ENCODE measurements at regions of chr12 and their contacts with region 1.

Region 1: DNA sequence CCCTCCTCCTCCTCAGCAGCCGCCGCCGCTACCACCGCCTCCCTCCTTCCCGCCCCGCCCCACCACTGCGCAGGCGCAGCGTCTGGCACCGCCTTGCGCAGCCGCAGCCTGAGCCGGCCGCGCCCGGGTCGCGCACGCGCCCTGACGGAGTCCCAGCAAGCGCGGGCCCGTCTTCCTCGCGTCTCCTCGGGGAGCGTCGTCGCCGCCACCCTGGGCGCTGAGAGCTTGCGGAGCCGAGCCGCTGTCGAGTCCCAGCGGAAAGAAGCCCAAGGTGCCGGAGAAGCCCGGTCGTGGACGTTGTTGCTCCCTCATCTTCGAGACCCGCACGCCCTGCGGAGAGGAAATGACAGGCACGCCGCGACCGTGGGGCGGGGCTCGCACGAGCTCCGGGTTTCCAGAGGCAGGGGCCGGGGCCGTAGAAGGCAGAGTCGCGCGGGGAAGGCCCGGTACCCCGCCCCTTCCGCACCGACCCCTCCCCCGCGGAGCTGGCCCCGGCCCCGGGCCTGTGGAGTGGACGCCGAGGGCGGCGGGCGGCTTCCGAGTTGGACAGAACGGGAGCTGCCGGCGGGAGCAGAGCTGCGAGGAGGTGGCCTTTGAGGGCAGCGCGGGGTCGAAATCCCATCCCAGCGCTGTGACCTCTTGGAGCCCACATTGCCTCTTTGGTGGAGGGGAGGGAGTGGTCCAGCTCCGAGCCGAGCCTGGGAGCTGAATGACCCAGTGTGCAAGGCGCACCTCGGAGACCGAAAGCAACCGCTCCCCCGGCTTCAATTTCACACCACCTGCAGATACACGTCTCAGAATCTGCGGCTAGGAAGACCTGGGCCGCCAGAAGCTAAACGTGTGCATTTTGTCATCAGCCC is 469 bp upstream of the RAB35 start:
- DNase-seq: peak; percentile 53 to 96 (median 82)
- H3K4me3 ChIP-seq: peak overlapping the region; percentile 59 to 97 (median 88)
- H3K27ac ChIP-seq: peak overlapping the region; percentile 45 to 98 (median 90)
- H3K27me3 ChIP-seq: no peaks in the 10 kb centered on the region
- CTCF ChIP-seq: peak in 14 of 56 donors; percentile 7 to 52 (median 21)

Region 2: DNA sequence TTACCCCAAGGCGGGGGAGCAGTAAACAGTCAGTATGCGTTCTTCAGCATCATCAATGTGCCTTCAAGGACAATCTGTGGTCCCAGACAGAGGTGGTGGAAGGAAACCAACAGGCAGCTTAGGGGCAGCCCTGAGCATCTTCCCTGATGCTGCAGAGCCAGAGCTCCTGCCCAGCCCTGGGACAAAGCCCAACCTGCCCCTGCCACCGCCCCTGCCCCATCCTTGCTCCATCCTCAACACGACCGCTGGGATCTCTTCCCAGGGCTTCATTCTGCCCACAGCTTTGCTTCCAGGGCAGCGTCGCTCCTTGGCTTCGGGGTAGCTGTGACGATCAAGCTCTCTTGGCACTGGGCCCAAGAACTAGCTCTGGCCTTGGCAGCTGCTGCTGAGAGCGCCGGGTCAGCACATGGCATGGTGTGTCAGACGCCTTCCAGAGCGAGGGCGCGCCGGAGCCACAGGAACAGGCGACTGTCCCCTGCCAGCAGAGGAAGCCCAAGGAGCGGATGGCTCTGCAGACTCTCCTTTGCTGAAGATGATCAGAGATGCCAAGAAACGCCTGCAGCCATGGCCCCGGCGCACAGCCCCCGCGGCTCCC is 16.5 kb before region 1 on chr12:
- intact Hi-C with region 1: no loop called
- DNase-seq: peak; percentile 46 to 85 (median 74)
- H3K4me3 ChIP-seq: peak overlapping the region in 15 of 59 donors; percentile 2 to 33 (median 22)
- H3K27ac ChIP-seq: peak overlapping the region in 54 of 59 donors; percentile 11 to 88 (median 68)
- H3K27me3 ChIP-seq: no peaks in the 10 kb centered on the region
- CTCF ChIP-seq: no peak

Region 3: GRCh38 chr12:120194534-120195395 is 77.7 kb after region 1 on chr12 and contains the start of gene GCN1:
- intact Hi-C with region 1: loop called in 1 of 2 experiments (anchors 5 kb)
- DNase-seq: peak; percentile 68 to 95 (median 84)
- H3K4me3 ChIP-seq: peak within 1 kb of the TSS; percentile 66 to 100 (median 96)
- H3K27ac ChIP-seq: peak within 1 kb of the TSS in 58 of 59 donors; percentile 31 to 93 (median 83)
- H3K27me3 ChIP-seq: no peaks in the 10 kb centered on the region
- CTCF ChIP-seq: peak in 21 of 56 donors; percentile 7 to 49 (median 22)
- total RNA-seq, gene GCN1: 44.5 to 107 (median 69.9) TPM